ENCODE measurements at regions of chr2 and their contacts with region 1.

Region 1: DNA sequence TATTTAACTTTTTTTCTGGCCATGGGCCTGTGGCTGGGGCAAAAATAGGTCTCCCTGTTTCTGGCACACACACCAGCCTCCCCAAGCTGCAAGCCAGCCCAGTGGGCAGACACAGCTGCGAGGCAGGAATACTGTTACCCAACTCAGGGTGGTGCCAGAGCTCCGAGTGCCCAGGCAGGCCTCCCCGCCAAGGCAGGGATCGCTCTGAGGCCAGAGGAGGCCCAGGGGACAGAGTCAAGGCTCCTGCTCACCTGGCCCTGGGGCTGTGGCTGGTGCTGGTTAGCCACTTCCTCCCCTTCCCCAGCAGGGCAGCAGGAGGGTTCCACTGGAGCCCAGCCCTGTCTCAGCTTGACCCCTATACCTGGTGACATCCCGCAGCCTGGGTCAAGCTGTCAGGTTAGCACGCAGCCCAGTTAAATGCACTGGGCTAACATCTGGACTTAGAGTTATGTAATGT is 67.1 kb upstream of the EPAS1 start:
- DNase-seq: peak; percentile 37
- ATAC-seq: peak; percentile 86
- H3K4me3 ChIP-seq: no peak overlapping the region
- H3K27ac ChIP-seq: peak overlapping the region; percentile 36
- H3K4me1 ChIP-seq: peaks cover 14% of the 10 kb centered on the region
- H3K27me3 ChIP-seq: no peaks in the 10 kb centered on the region
- CTCF ChIP-seq: peak; percentile 4 to 61 (median 45); a peak in 3 of 6 replicates
- EP300 ChIP-seq: no peak
- POLR2A ChIP-seq: no peak
- RAD21 ChIP-seq: peak; percentile 48; the same call in 1 of the 2 replicates

Region 2: DNA sequence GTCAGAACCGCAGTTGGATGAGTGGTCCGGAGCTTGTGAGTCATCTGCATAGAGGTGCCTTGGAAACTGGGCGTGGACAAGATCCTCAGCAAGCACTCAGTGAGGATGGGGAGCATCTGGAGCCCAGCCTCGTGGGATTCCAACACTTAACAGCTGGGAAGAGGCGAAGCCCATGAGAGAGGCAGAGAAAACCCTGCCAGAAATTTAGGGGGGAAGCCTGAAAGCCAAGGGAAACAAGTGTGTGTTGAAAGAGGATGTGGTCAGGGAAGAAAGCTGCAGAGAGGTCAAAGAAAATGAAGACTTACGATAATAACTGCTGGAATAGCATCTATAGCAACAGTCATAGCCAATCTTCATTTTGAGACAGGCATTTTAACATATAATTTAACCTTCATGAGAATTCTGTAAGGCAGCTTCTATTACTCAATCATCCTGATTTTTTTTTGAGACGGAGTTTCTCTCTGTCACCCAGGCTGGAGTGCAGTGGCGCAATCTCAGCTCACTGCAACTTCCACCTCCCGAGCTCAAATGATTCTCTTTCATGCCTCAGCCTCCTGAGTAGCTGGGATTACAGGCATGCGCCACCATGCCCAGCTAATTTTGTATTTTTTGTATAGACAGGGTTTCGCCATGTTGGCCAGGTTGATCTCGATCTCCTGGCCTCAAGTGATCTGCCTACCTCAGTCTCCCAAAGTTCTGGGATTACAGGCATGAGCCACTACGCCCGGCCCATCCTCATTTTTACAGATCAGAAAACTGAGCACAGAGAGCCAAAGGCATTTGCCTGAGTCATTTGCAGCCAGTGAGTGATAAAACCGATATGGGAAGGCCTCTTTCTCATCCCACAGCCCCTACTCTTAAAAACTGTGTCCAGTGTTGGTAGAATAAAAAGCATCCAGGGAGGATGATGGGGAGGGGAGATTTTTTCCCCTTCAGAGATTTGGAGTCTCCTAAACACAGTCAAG is 147.3 kb before region 1 on chr2:
- CTCF ChIA-PET with region 1: interaction called, 45 read pairs
- POLR2A ChIA-PET with region 1: interaction called, 28 read pairs
- RAD21 ChIA-PET with region 1: interaction called, 79 read pairs
- SMC1A ChIA-PET with region 1: interaction called, 82 read pairs
- in situ Hi-C with region 1: no loop called
- intact Hi-C with region 1: loop called (anchors 2 kb)
- DNase-seq: no peak
- ATAC-seq: no peak
- H3K4me3 ChIP-seq: no peak overlapping the region
- H3K27ac ChIP-seq: no peak overlapping the region
- H3K4me1 ChIP-seq: 0 out of 2 replicates have a peak, but pooled peaks cover 3% of the 10 kb centered on the region
- H3K27me3 ChIP-seq: no peaks in the 10 kb centered on the region
- CTCF ChIP-seq: no peak
- EP300 ChIP-seq: no peak
- POLR2A ChIP-seq: no peak
- RAD21 ChIP-seq: no peak

Region 3: DNA sequence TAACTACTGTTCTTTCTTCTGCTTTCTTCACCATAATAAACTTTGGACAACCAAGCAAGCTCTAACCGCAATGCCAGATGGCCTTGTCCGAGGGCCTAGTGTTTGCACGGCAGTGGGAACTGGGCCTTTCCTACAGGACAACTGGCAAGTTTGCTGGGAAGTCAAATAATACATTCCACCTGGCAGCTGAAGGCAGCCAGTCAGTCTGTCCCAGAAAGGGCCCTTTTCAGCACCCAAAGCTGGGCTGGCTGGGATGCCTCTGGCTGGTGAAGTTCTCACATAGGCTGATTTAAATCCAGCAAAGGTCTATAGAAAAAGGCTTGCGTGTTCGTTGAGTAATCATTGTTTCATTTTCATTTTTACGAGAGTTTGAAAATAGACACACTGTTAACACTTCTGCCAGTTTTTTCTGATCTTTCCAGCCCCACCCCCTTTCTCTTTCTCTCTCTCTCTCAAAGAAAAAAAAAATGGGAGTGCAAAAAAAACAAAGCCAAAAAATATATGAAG is 43.0 kb before region 1 on chr2:
- CTCF ChIA-PET with region 1: interaction called, 8 read pairs
- POLR2A ChIA-PET with region 1: no interaction called
- RAD21 ChIA-PET with region 1: interaction called, 35 read pairs
- SMC1A ChIA-PET with region 1: interaction called, 37 read pairs
- in situ Hi-C with region 1: no loop called
- intact Hi-C with region 1: loop called (anchors 5 kb)
- DNase-seq: peak; percentile 70
- ATAC-seq: peak; percentile 99
- H3K4me3 ChIP-seq: peak overlapping the region; percentile 41
- H3K27ac ChIP-seq: peak overlapping the region; percentile 66
- H3K4me1 ChIP-seq: peaks cover 5% of the 10 kb centered on the region
- H3K27me3 ChIP-seq: no peaks in the 10 kb centered on the region
- CTCF ChIP-seq: no peak
- EP300 ChIP-seq: peak in 1 of 2 experiments; percentile 20; a peak in 1 of 4 replicates
- POLR2A ChIP-seq: no peak
- RAD21 ChIP-seq: no peak

Region 4: GRCh38 chr2:46246790-46247189 is 16.6 kb after region 1 on chr2:
- CTCF ChIA-PET with region 1: interaction called, 14 read pairs
- POLR2A ChIA-PET with region 1: interaction called, 19 read pairs
- RAD21 ChIA-PET with region 1: interaction called, 33 read pairs
- SMC1A ChIA-PET with region 1: interaction called, 49 read pairs
- in situ Hi-C with region 1: no loop called
- intact Hi-C with region 1: loop called (anchors 1 kb)
- DNase-seq: peak; percentile 68
- ATAC-seq: peak; percentile 98
- H3K4me3 ChIP-seq: no peak overlapping the region
- H3K27ac ChIP-seq: no peak overlapping the region
- H3K4me1 ChIP-seq: no peaks in the 10 kb centered on the region
- H3K27me3 ChIP-seq: no peaks in the 10 kb centered on the region
- CTCF ChIP-seq: no peak
- EP300 ChIP-seq: peak; percentile 42 to 66; a peak in 2 of 4 replicates
- POLR2A ChIP-seq: no peak
- RAD21 ChIP-seq: no peak

Region 5: GRCh38 chr2:46296840-46297545 is 66.8 kb after region 1 on chr2 and contains the start of gene EPAS1:
- CTCF ChIA-PET with region 1: interaction called, 21 read pairs
- POLR2A ChIA-PET with region 1: interaction called, 6 read pairs
- RAD21 ChIA-PET with region 1: interaction called, 29 read pairs
- SMC1A ChIA-PET with region 1: interaction called, 21 read pairs
- in situ Hi-C with region 1: no loop called
- intact Hi-C with region 1: loop called (anchors 5 kb)
- DNase-seq: peak; percentile 8
- ATAC-seq: peak; percentile 88
- H3K4me3 ChIP-seq: peak within 1 kb of the TSS; percentile 76
- H3K27ac ChIP-seq: no peak within 1 kb of the TSS
- H3K4me1 ChIP-seq: peaks cover 8% of the 10 kb centered on the region
- H3K27me3 ChIP-seq: peaks cover 5 to 30% of the 10 kb centered on the region in 2 experiments
- CTCF ChIP-seq: no peak
- EP300 ChIP-seq: no peak
- POLR2A ChIP-seq: no peak; the same call in 1 of the 2 replicates
- RAD21 ChIP-seq: no peak
- polyA plus RNA-seq, gene EPAS1: 0.11 TPM in 1 of 2 experiments, not detected in the other

Region 6: DNA sequence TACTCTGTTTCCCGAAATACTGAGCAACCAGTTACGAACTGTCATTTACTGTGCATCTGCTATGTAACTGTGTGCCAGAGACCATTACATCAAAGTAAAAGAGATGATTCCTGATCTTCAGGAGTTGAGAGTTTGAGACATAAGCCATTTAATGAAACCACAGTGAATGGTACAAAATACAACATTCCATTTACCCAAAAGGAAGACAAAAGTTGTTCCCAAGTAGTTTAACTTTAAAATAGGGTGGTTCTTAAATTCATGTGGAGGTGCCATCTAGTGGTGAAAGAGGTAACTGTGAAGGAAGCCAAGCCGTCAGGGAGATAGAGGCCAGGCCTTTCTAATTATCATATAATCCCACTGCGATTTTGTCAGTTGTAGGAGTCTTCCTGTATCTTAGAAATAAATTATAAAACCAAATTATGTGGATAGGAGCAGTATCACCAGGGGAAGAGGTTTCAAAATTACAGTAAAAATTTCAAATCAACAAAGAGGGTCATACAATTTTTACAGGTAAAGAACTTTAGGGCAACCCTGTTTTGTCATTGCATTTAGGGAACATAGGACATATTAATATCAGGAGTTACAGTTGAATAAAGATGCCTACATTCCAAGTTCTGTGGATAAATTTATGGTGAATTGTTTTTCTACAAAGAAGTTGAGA is 134.8 kb after region 1 on chr2:
- CTCF ChIA-PET with region 1: interaction called, 47 read pairs
- POLR2A ChIA-PET with region 1: interaction called, 8 read pairs
- RAD21 ChIA-PET with region 1: interaction called, 52 read pairs
- SMC1A ChIA-PET with region 1: interaction called, 81 read pairs
- in situ Hi-C with region 1: no loop called
- intact Hi-C with region 1: loop called (anchors 1 kb)
- DNase-seq: no peak
- ATAC-seq: peak; percentile 79
- H3K4me3 ChIP-seq: no peak overlapping the region
- H3K27ac ChIP-seq: no peak overlapping the region
- H3K4me1 ChIP-seq: no peaks in the 10 kb centered on the region
- H3K27me3 ChIP-seq: peaks cover 0 to 7% of the 10 kb centered on the region in 2 experiments; a peak in 2 of 4 replicates
- CTCF ChIP-seq: peak; percentile 65 to 79 (median 78)
- EP300 ChIP-seq: no peak
- POLR2A ChIP-seq: no peak
- RAD21 ChIP-seq: peak; percentile 81

Region 7: GRCh38 chr2:46385786-46386577 is 155.8 kb after region 1 on chr2:
- CTCF ChIA-PET with region 1: no interaction called
- POLR2A ChIA-PET with region 1: no interaction called
- RAD21 ChIA-PET with region 1: no interaction called
- SMC1A ChIA-PET with region 1: no interaction called
- in situ Hi-C with region 1: no loop called
- intact Hi-C with region 1: no loop called
- DNase-seq: no peak
- ATAC-seq: no peak
- H3K4me3 ChIP-seq: no peak overlapping the region
- H3K27ac ChIP-seq: no peak overlapping the region
- H3K4me1 ChIP-seq: no peaks in the 10 kb centered on the region
- H3K27me3 ChIP-seq: peaks cover 0 to 4% of the 10 kb centered on the region in 2 experiments; a peak in 2 of 4 replicates
- CTCF ChIP-seq: no peak
- EP300 ChIP-seq: no peak
- POLR2A ChIP-seq: no peak
- RAD21 ChIP-seq: no peak

Region 8: DNA sequence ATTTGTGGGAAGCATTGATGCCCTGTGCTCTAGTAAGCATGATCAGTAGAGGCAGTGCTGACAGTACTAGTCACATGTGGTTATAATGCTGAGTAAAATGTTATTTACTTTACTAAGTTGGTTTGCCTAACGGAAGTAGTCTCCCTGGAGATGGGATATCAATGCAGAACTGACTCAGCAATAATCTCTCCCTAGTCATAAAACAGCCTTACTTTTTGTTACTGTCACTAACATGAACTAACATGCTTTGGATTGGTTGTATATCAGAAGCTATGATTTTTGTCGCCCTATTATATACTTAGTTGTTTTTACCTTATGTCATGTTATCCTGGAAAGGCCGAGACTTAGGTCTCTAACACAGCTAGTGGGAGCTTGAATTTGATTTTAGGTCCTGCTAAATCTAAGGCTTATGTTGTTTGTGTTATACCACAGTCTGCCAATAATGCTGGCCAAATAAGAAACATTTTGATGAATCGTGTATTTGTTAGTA is 518.9 kb after region 1 on chr2:
- CTCF ChIA-PET with region 1: no interaction called
- POLR2A ChIA-PET with region 1: no interaction called
- RAD21 ChIA-PET with region 1: no interaction called
- SMC1A ChIA-PET with region 1: no interaction called
- in situ Hi-C with region 1: no loop called
- intact Hi-C with region 1: no loop called
- DNase-seq: no peak
- ATAC-seq: no peak
- H3K4me3 ChIP-seq: no peak overlapping the region
- H3K27ac ChIP-seq: no peak overlapping the region
- H3K4me1 ChIP-seq: no peaks in the 10 kb centered on the region; the same call in 1 of the 2 replicates
- H3K27me3 ChIP-seq: no peaks in the 10 kb centered on the region
- CTCF ChIP-seq: no peak
- EP300 ChIP-seq: no peak
- POLR2A ChIP-seq: no peak
- RAD21 ChIP-seq: no peak